A549 (cell line): ENCODE measurements at regions of chr1 and their contacts with region 1.

Region 1: DNA sequence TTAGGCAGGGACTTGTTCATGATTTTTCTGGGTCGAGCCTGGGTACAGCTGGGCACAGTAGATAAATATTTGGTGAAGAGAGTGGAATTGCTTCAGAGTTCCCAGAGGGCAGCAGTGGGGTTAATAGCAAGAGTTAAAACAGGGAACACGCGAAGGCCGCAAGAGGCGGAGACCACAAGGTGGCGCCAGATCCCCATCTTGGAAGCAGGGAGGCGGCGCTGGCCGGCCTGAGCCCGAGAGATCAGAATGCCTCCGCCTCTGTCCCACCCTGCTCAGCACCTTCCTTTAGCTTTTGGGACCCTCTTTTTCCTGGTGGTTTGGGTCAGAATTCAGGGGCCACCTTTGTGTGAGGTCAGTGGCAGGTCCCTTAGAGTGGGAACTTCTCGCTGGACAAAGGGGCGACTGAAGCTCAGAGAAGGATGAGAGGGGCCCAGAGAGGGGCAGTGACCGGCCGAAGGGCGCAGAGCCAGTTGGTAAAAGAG is 6.5 kb upstream of the PADI2 start:
- DNase-seq: peak; percentile 79 to 87
- ATAC-seq: peak; percentile 90 to 92
- H3K4me3 ChIP-seq: no peak overlapping the region
- H3K27ac ChIP-seq: peak overlapping the region; percentile 85 to 95
- H3K4me1 ChIP-seq: peaks cover 51% of the 10 kb centered on the region
- CTCF ChIP-seq: peak; percentile 92
- EP300 ChIP-seq: no peak
- POLR2A ChIP-seq: no peak
- RAD21 ChIP-seq: peak; percentile 97 to 99

Region 2: DNA sequence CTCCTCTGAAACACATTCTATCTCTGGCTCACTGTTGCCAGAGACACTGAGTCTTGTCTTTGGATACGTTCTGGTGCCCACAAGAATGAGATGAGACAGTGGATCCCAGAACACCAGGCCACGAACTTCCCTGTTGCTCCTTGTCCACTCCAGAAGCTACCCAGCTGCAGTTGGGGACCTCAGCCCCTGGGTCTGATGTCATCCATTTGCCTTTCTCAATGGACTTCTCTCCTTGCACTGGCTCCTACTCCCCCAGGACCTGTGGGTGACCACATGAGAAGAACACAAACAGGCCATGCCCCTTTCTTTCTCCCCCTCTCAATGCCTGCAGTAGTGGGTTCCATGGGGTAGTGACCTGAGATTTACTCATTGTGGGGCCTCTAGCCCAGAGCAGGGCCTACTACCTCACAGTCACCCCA is 518.4 kb before region 1 on chr1:
- CTCF ChIA-PET with region 1: no interaction called
- POLR2A ChIA-PET with region 1: no interaction called
- DNase-seq: no peak
- ATAC-seq: no peak
- H3K4me3 ChIP-seq: no peak overlapping the region
- H3K27ac ChIP-seq: no peak overlapping the region
- H3K4me1 ChIP-seq: peaks cover 16% of the 10 kb centered on the region
- CTCF ChIP-seq: no peak
- EP300 ChIP-seq: no peak
- POLR2A ChIP-seq: no peak
- RAD21 ChIP-seq: no peak

Region 3: DNA sequence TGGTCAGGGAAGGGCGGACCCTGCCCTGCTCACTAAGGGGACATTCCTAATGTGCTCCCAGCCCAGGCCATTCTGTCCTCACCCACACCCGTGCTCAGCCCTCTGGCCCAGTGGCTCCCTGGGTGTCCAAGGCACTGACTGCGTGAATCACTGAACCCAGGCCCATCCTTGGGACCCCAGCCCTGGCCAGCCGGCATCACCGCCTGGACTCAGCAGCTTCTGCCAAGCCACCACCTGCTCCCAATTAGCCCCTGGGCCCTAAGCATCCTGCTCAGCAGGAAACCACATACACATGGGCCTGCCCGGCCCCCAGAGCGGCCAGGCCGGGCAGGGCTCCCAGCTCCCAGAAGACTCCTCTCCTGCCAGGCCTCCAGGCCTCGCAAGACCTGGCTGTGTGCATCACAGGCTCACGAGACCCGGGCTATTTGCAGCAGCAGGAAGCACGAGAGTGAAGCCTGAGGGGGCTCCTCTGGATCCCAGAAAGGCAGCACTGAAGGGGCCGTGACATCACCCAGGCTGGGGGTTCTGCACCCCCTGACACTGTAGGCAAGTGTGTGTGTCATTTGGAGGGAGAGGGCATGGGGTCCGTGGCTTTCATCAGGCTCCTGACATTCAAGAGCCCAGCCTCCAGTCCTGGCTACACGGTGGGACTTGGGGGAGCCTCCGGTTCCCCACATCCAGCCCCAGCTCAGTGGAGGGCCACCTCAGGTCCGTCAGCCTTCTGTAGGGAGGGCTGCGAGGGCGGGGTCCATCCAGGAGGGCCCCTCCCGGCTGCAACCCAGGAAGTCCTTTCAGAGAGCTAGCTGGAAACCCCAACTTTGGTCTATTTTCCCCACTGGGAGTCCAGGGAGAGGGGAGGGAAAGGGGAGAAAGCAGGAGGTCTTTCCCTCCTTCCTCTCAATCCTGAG is 147.0 kb before region 1 on chr1:
- CTCF ChIA-PET with region 1: no interaction called
- POLR2A ChIA-PET with region 1: no interaction called
- DNase-seq: no peak
- ATAC-seq: peak in 1 of 2 experiments; percentile 9; a peak in 1 of 6 replicates
- H3K4me3 ChIP-seq: no peak overlapping the region
- H3K27ac ChIP-seq: 0 out of 6 replicates have a peak overlapping the region, but pooled peaks of 1 of the 2 experiments have one; percentile 26
- H3K4me1 ChIP-seq: no peaks in the 10 kb centered on the region
- CTCF ChIP-seq: no peak
- EP300 ChIP-seq: no peak
- POLR2A ChIP-seq: no peak
- RAD21 ChIP-seq: no peak

Region 4: DNA sequence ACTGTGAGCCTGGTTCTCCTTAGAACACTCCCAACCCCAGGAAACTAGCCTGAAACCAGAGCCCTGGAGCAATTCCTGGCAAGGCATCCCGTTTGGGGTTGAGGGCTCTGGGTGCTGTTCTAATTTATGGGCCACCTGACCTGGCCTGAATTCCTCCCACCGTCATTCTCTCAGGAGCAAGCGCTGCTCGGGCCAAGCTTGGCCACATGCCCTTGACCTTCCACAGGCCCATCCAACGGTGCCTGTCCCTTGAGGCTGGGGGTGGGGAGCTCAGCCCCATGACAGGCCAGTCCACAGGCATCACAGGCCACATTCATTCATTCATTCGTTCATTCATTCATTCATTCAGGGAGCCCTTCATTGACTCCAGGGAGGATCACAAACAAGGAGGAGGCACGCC is 11.8 kb before region 1 on chr1:
- CTCF ChIA-PET with region 1: interaction called, 19 read pairs
- POLR2A ChIA-PET with region 1: no interaction called
- DNase-seq: no peak
- ATAC-seq: no peak
- H3K4me3 ChIP-seq: no peak overlapping the region
- H3K27ac ChIP-seq: no peak overlapping the region
- H3K4me1 ChIP-seq: 0 out of 3 replicates have a peak, but pooled peaks cover 3% of the 10 kb centered on the region
- CTCF ChIP-seq: no peak
- EP300 ChIP-seq: no peak
- POLR2A ChIP-seq: no peak
- RAD21 ChIP-seq: no peak

Region 5: DNA sequence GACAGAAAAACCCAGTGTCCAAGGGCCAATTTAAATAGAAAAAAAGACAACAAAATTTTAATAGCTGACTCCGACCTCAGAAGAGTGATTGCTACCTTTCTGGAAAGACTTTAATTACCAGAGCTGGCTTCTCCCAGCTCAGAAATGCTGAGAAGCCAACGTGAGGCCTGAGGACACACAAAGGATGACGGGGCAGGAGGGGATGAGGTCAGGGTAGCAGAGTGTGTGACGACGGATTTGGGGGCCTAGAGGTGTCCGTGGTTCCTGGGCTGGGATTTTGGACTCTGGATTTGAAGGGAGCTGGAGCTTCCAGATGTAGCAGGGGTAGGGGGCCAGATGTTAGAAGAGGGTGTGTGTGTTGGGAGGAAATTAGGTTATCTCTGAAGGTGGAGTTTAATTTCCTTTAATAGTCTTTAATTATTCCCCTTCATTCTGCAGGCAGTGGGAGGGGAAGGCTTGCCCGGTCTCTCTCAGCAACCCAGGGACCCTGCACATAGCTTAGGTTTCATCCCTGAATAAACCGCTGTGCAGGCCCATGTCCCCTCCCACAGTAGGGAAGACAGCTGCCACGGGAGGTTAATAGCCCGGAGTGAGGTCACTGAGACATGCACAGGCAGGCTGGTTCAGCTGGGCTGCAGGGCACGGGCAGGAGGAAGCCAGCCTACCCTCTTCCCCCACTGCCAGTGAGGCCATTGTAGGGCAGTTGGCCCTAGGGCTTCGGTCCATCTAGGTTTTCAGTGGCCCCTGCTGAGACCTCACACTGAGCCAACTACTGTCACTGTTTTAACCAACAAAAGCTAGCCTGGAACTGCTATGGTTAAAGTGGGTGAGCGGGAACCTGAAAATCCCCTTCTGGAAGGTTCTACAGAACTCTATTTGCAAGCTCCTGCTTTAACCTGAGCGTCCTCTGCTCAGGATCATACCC is 119.3 kb after region 1 on chr1:
- CTCF ChIA-PET with region 1: interaction called, 380 read pairs
- POLR2A ChIA-PET with region 1: interaction called, 7 read pairs
- DNase-seq: no peak
- ATAC-seq: no peak
- H3K4me3 ChIP-seq: no peak overlapping the region
- H3K27ac ChIP-seq: peak overlapping the region in 1 of 2 experiments; percentile 66; a peak in 3 of 6 replicates
- H3K4me1 ChIP-seq: peaks cover 10% of the 10 kb centered on the region
- CTCF ChIP-seq: no peak
- EP300 ChIP-seq: no peak
- POLR2A ChIP-seq: no peak
- RAD21 ChIP-seq: no peak

Region 6: GRCh38 chr1:17259233-17259873 is 133.6 kb after region 1 on chr1:
- CTCF ChIA-PET with region 1: interaction called, 21 read pairs
- POLR2A ChIA-PET with region 1: no interaction called
- DNase-seq: no peak
- ATAC-seq: peak in 1 of 2 experiments; percentile 51; a peak in 2 of 6 replicates
- H3K4me3 ChIP-seq: no peak overlapping the region
- H3K27ac ChIP-seq: peak overlapping the region; percentile 49 to 84; a peak in 5 of 6 replicates
- H3K4me1 ChIP-seq: peaks cover 21% of the 10 kb centered on the region
- CTCF ChIP-seq: no peak
- EP300 ChIP-seq: no peak
- POLR2A ChIP-seq: no peak
- RAD21 ChIP-seq: no peak

Region 7: GRCh38 chr1:17274186-17275170 is 148.7 kb after region 1 on chr1:
- CTCF ChIA-PET with region 1: interaction called, 18 read pairs
- POLR2A ChIA-PET with region 1: interaction called, 8 read pairs
- DNase-seq: peak; percentile 69 to 76
- ATAC-seq: peak; percentile 76 to 92; a peak in 5 of 6 replicates
- H3K4me3 ChIP-seq: no peak overlapping the region
- H3K27ac ChIP-seq: peak overlapping the region; percentile 49 to 86; a peak in 5 of 6 replicates
- H3K4me1 ChIP-seq: peaks cover 51% of the 10 kb centered on the region
- CTCF ChIP-seq: peak; percentile 57
- EP300 ChIP-seq: no peak
- POLR2A ChIP-seq: no peak
- RAD21 ChIP-seq: peak; percentile 69 to 83

Region 8: DNA sequence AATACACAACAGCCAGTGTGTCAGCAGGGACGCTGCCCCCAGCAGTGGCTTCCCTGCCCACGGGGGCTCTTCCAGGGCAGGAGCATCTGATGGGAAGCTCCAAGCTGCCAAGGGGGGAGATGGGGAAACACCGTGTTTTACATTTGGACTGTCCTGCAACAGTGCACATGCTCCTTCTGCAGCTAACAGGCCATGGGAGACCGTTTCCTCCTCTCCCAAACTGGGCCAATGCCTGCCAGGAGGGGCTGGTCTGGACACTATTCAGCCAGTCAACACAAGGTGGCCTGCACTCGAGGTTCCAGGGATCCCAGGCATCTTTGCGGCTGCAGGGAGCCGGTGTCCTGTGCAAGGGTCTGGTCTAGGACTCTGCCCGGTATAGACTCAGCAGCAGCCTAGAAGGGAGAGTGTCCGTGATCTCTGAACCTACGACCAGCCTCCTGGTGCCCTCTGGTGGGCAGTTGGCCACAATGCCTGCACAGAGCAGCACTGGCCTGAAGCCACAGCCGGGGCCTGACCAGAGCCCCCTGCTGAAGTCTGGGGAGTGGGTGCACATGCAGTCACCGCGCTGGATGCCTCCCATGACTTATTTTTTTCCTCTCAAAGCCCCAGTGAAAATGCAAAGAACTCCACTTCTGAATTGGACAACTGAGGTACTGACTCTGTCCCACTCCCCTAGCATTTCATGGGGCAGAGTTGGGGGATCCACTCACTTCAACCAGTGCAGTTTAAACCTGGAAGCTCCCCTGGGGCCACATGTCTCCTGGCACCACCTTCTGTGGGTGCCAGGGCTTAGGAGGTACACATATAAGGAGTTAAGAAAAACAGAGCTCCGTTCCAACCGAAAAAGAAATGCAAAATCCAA is 280.3 kb after region 1 on chr1:
- CTCF ChIA-PET with region 1: interaction called, 47 read pairs
- POLR2A ChIA-PET with region 1: no interaction called
- DNase-seq: peak; percentile 62 to 70
- ATAC-seq: peak; percentile 83 to 91
- H3K4me3 ChIP-seq: no peak overlapping the region
- H3K27ac ChIP-seq: peak overlapping the region in 1 of 2 experiments; percentile 69; a peak in 2 of 6 replicates
- H3K4me1 ChIP-seq: no peaks in the 10 kb centered on the region
- CTCF ChIP-seq: peak; percentile 63
- EP300 ChIP-seq: no peak
- POLR2A ChIP-seq: no peak
- RAD21 ChIP-seq: peak; percentile 74

Region 9: DNA sequence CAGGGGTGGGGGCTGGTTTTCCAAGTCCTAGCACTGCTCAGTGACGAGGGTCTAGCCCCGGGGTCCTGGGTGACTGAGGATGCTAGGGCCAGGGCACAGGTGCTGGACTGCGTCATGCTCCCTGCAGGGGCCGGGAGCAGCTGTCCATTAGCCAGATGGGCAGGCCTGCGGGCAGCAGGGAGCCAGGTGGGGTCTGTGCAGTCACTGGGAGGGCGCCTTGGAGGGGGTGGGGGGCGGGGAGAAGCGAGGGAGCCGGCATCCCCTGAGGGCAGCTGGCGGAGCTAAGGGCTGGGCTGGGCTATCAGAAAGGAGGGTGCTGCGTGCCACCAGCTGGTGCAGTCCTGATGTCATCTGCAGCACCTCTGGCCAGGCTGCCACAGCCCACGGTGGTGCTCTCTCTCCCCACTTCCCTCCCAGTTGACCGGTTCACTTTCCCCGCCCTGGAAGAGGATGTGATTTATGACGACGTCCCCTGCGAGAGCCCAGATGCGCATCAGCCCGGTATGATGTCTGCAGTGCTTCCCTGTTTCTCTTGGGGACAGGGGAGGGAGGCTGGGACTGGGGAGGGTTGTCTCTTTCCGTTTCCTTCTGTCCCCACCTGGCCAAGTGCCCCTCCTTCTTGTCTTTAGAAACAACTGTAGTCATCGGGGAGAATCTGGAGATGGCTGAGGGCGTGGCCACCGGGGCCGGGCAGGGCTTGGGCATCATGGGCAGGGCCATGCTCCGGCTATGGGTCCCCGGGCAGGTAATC is 477.5 kb after region 1 on chr1:
- CTCF ChIA-PET with region 1: no interaction called
- POLR2A ChIA-PET with region 1: no interaction called
- DNase-seq: no peak
- ATAC-seq: no peak
- H3K4me3 ChIP-seq: no peak overlapping the region
- H3K27ac ChIP-seq: no peak overlapping the region
- H3K4me1 ChIP-seq: no peaks in the 10 kb centered on the region
- CTCF ChIP-seq: no peak
- EP300 ChIP-seq: no peak
- POLR2A ChIP-seq: no peak
- RAD21 ChIP-seq: no peak